Activated CD4-positive, alpha-beta T cell treated with anti-CD3 and anti-CD28 coated beads for 36 hours (primary cell): ENCODE measurements at regions of chr7 and their contacts with region 1.

Region 1: DNA sequence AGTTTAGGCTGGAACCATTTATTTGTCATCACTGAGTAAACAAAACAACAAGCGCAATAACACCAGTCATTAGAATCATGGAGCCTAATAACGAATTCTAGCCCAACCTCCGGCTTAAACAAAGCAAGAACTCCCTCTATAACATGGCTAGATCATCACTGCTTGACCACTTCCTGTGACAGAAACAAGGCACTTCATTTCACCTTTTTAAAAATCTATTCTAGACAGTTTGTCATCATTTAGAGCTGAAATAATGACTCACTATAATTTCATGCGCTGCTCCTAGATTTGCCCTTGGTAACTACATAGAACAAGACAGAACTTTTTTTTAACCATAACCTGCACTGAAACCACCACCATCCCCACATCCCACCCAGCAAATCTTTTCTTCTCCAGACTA is 81.3 kb downstream of the OSBPL3 start:
- DNase-seq: no peak
- ATAC-seq: peak; percentile 83
- H3K4me3 Mint-ChIP-seq: peak overlapping the region; percentile 0
- H3K27ac Mint-ChIP-seq: peak overlapping the region; percentile 28
- H3K4me1 Mint-ChIP-seq: peaks cover 72% of the 10 kb centered on the region
- H3K27me3 Mint-ChIP-seq: no peaks in the 10 kb centered on the region

Region 2: DNA sequence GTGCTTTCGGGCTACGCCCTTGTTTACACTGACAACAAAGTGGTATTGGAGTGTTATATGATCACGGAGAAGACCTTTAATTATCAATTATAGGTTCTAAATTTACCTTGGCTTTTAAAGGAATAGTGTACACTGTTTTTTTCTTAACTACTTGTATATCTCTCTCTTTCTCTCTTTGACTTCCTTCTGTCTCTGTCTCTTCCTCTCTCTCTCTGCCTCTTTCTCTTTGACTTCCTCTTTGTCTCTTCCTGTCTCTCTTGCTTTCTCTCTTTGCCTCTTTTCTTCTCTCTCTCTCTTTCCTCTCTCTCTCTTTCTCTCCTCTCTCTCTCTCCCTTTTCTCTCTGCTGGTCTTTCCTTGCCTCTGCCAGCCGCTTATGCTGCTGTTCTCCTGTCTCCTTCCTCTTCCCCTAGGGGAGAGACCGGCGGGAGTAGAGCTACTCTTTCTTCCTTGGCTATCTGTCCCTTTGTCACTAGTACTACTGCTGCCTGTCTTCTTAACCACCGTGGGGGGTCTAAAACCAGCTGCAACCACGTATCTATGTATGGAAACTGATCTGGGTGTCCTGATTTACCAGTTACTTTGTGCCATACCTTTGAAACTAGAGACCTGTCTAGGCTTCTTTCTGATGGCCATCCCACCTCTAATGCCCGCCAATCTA is 104.6 kb before region 1 on chr7:
- CTCF ChIA-PET with region 1: no interaction called
- POLR2A ChIA-PET with region 1: no interaction called
- intact Hi-C with region 1: no loop called
- DNase-seq: no peak
- ATAC-seq: no peak
- H3K4me3 Mint-ChIP-seq: no peak overlapping the region
- H3K27ac Mint-ChIP-seq: peak overlapping the region; percentile 32
- H3K4me1 Mint-ChIP-seq: peaks cover 16% of the 10 kb centered on the region
- H3K27me3 Mint-ChIP-seq: no peaks in the 10 kb centered on the region

Region 3: GRCh38 chr7:24851786-24852185 is 46.9 kb before region 1 on chr7:
- CTCF ChIA-PET with region 1: no interaction called
- POLR2A ChIA-PET with region 1: no interaction called
- intact Hi-C with region 1: no loop called
- DNase-seq: peak; percentile 68
- ATAC-seq: peak; percentile 97
- H3K4me3 Mint-ChIP-seq: no peak overlapping the region
- H3K27ac Mint-ChIP-seq: peak overlapping the region; percentile 12
- H3K4me1 Mint-ChIP-seq: peaks cover 10% of the 10 kb centered on the region
- H3K27me3 Mint-ChIP-seq: no peaks in the 10 kb centered on the region

Region 4: DNA sequence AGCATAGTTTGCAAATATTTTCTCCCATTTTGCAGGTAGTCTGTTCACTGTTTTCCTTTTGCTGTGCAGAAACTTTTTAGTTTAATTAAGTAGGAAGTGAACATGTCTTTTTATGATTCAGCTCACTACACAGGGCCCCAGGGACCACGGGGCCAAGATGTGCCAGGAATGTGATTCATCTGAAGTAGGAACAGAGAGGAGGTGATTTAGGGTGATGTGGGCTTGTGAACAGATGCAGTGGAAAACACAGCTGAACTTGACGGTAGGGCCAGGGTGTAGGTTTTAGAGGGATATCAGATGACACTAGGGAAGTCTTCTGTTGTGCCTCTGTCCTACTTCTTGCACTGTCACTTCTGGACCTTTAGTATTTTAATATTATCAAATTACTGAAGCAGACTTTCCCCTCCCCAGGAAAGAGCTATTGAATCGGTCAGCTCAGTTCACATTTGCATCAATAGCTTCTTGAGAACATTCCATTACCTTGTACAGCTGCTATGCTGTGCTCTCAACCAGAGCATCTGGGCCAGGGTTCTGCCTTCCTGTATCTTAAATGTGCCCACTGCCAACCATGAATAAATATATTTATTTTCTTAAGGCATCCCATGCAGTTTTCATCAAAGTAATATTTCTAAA is 15.6 kb before region 1 on chr7:
- CTCF ChIA-PET with region 1: interaction called, 5 read pairs
- POLR2A ChIA-PET with region 1: interaction called, 4 read pairs
- intact Hi-C with region 1: loop called in 1 of 2 experiments (anchors 2 kb)
- DNase-seq: peak; percentile 74
- ATAC-seq: peak; percentile 87
- H3K4me3 Mint-ChIP-seq: no peak overlapping the region
- H3K27ac Mint-ChIP-seq: peak overlapping the region; percentile 66
- H3K4me1 Mint-ChIP-seq: peaks cover 74% of the 10 kb centered on the region
- H3K27me3 Mint-ChIP-seq: no peaks in the 10 kb centered on the region

Region 5: GRCh38 chr7:24932815-24933214 is 34.1 kb after region 1 on chr7:
- CTCF ChIA-PET with region 1: no interaction called
- POLR2A ChIA-PET with region 1: no interaction called
- intact Hi-C with region 1: no loop called
- DNase-seq: no peak
- ATAC-seq: no peak
- H3K4me3 Mint-ChIP-seq: no peak overlapping the region
- H3K27ac Mint-ChIP-seq: no peak overlapping the region
- H3K4me1 Mint-ChIP-seq: peaks cover 44% of the 10 kb centered on the region
- H3K27me3 Mint-ChIP-seq: no peaks in the 10 kb centered on the region

Region 6: GRCh38 chr7:24948739-24949138 is 50.0 kb after region 1 on chr7:
- CTCF ChIA-PET with region 1: no interaction called
- POLR2A ChIA-PET with region 1: no interaction called
- intact Hi-C with region 1: no loop called
- DNase-seq: no peak
- ATAC-seq: peak; percentile 81
- H3K4me3 Mint-ChIP-seq: no peak overlapping the region
- H3K27ac Mint-ChIP-seq: peak overlapping the region; percentile 52
- H3K4me1 Mint-ChIP-seq: peaks cover 41% of the 10 kb centered on the region
- H3K27me3 Mint-ChIP-seq: no peaks in the 10 kb centered on the region